GM10248 (cell line): ENCODE measurements at regions of chr20 and their contacts with region 1.

Region 1: GRCh38 chr20:53891306-53891944 is 179.0 kb downstream of the BCAS1 start:
- DNase-seq: no peak
- CTCF ChIP-seq: no peak

Region 2: DNA sequence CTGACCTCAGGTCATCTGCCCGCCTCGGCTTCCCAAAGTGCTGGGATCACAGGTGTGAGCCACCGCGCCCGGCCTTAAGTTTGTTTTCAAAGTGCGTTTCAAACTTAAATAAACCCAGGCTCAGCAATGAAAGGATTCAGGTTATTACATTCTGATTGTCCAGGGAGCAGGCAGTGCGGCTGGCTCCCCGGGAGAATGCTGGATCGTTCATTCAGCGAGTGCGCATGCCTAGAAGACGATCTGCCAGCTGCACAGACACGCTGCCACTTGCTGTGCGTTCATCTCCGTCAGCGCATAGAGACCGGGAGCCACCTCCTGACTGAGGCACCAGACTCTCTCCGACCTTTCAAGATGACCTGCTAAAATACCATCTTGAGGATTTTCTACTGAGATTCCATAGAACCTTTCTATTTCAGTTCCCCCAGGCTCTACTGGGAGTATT is 133.9 kb before region 1 on chr20:
- CTCF ChIA-PET with region 1: no interaction called
- POLR2A ChIA-PET with region 1: no interaction called
- DNase-seq: no peak
- CTCF ChIP-seq: no peak

Region 3: DNA sequence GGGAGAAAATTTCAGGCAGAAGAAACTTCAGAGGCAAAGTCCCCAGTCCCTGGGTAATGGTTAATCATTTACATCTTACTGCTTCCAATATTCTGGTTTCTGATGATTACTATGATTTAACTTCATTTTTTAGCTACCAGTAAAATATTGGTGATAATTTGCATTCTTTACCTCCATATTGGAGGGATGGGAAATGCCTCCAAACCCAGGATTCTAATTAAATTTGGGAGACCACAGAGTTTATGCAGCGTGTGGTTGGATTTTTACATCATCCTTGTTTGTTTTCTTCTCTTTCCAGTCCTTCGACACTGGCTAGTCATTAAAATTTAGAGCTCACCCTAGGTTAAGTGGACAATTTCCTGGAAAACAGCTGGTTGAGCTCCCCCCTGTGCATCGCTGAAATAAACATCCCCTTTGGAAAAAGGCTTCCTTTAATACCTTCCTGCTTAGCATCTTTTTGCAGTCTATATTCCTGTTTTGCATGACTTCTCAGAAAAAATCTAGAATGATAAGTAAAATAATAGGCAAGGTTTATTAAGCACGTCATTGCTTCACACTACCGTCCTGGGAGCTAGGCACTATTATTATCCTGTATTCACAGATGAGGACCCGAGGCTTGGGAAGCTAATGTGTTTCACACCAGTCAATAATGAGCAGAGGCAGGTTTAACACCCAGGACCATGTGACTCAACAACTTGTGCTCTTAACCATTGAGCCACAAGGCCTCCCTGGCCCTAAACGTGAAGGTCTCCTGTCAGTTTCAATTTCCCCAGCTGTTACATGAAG is 12.7 kb before region 1 on chr20:
- CTCF ChIA-PET with region 1: interaction called, 10 read pairs
- POLR2A ChIA-PET with region 1: interaction called, 3 read pairs
- DNase-seq: no peak
- CTCF ChIP-seq: no peak